A549 (cell line): ENCODE measurements at regions of chrX and their contacts with region 1.

Region 1: DNA sequence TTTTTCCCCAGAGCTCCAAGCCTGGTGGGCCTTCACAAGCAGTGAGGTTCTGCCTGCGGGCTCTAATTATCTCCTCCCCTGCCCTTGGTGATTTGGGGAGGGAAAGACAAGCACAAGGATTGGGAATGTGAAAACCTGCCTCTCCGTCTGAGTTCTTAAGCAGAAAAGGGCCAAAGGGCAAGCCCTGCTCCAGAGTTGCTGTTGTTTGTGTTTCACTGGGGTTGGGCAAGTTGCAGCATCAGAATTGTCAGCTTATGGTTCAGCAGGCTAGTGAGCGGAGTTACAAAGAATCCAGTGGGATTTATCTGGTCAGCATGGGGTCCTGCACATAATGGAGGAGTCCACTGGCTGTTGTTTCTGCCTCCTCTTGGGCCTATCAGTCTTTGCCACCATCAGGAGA is 60.5 kb downstream of the NHS start:
- DNase-seq: no peak
- ATAC-seq: no peak
- H3K4me3 ChIP-seq: no peak overlapping the region
- H3K27ac ChIP-seq: peak overlapping the region in 1 of 2 experiments; percentile 54; a peak in 2 of 6 replicates
- H3K4me1 ChIP-seq: peaks cover 19% of the 10 kb centered on the region
- CTCF ChIP-seq: no peak
- EP300 ChIP-seq: no peak
- POLR2A ChIP-seq: no peak
- RAD21 ChIP-seq: no peak

Region 2: DNA sequence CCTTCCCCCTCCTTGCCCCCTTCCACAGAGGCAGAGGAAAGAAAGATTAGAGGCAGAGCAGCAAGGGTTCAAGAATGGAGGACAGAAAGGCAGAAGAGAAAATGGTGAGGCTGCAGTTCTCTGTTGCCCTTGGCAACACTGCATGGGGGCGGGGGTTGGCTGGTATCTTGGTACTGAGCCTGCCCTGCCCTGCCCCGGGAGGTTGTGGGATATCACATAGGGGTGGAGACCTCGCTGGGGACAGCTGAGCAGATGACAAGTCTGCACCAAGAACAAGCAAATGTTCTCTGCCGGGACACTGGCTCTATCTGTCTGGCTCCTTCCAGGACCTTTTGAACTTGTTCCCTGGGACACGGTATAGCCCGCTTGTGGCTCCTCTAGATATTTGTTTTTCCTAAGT is 20.6 kb before region 1 on chrX:
- CTCF ChIA-PET with region 1: no interaction called
- POLR2A ChIA-PET with region 1: no interaction called
- DNase-seq: no peak
- ATAC-seq: peak in 1 of 2 experiments; percentile 65; a peak in 3 of 6 replicates
- H3K4me3 ChIP-seq: no peak overlapping the region
- H3K27ac ChIP-seq: peak overlapping the region in 1 of 2 experiments; percentile 87; a peak in 3 of 6 replicates
- H3K4me1 ChIP-seq: peaks cover 68% of the 10 kb centered on the region
- CTCF ChIP-seq: no peak
- EP300 ChIP-seq: no peak
- POLR2A ChIP-seq: no peak
- RAD21 ChIP-seq: no peak

Region 3: GRCh38 chrX:17453788-17454187 is 18.3 kb after region 1 on chrX:
- CTCF ChIA-PET with region 1: interaction called, 3 read pairs
- POLR2A ChIA-PET with region 1: interaction called, 10 read pairs
- DNase-seq: no peak
- ATAC-seq: no peak
- H3K4me3 ChIP-seq: no peak overlapping the region
- H3K27ac ChIP-seq: no peak overlapping the region
- H3K4me1 ChIP-seq: peaks cover 11% of the 10 kb centered on the region; the same call in 2 of the 3 replicates
- CTCF ChIP-seq: no peak
- EP300 ChIP-seq: no peak
- POLR2A ChIP-seq: no peak
- RAD21 ChIP-seq: no peak